ENCODE measurements at regions of chr1 and their contacts with region 1.

Region 1: GRCh38 chr1:1406817-1407635 is at the start of gene MRPL20:
- DNase-seq: peak; percentile 96 to 98
- ATAC-seq: peak; percentile 97 to 99 (median 98)
- H3K4me3 ChIP-seq: peak within 1 kb of the TSS; percentile 92
- H3K27ac ChIP-seq: peak within 1 kb of the TSS; percentile 83
- H3K4me1 ChIP-seq: peaks cover 29% of the 10 kb centered on the region
- H3K27me3 ChIP-seq: no peaks in the 10 kb centered on the region
- CTCF ChIP-seq: no peak
- total RNA-seq, gene MRPL20: 114 to 159 (median 143) TPM

Region 2: DNA sequence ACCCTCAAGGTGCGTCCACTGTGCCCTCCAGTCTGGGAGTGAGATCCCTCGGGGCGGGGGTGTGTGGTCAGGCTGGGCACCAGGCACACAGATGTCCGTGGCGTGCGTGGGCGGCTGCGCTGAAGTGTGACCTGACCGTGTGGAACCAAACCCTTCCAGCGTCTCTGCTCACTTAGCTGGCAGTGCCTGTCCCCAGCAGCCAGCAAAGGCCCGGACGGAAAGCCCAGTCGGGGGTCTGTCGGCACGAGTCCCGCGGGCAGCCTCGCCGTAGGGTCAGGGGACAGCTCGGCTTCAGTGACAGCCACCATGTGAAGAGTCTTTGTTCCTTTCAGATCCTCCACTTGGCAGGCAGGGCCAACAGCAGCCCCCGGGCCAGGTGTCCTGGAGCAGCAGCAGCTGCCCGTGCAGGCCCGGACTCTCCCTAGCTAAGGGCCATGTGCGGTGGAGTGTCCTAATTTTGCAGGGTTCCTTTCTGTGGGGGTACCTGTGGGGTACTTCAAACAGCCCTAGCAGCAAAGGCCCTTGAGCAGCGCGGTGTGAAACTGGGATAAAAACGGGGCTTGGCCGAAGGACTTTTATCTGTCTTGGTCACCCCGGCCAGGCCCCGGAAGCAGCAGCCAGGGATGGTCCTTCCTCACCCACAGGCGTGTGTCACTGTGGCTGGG is 221.8 kb before region 1 on chr1:
- intact Hi-C with region 1: no loop called
- DNase-seq: peak in 1 of 2 donors; percentile 13
- ATAC-seq: no peak
- H3K4me3 ChIP-seq: no peak overlapping the region
- H3K27ac ChIP-seq: no peak overlapping the region
- H3K4me1 ChIP-seq: no peaks in the 10 kb centered on the region
- H3K27me3 ChIP-seq: peaks cover 0 to 20% (median 2%) of the 10 kb centered on the region in 3 donors
- CTCF ChIP-seq: no peak

Region 3: GRCh38 chr1:1441002-1441888 is 34.2 kb after region 1 on chr1:
- intact Hi-C with region 1: loop called in 1 of 2 experiments (anchors 5 kb)
- DNase-seq: peak; percentile 64 to 80
- ATAC-seq: peak; percentile 82 to 95 (median 88)
- H3K4me3 ChIP-seq: peak overlapping the region; percentile 18
- H3K27ac ChIP-seq: no peak overlapping the region
- H3K4me1 ChIP-seq: peaks cover 18% of the 10 kb centered on the region
- H3K27me3 ChIP-seq: peaks cover 0 to 8% (median 0%) of the 10 kb centered on the region in 3 donors
- CTCF ChIP-seq: peak; percentile 87

Region 4: GRCh38 chr1:1462318-1462966 is 55.4 kb after region 1 on chr1:
- intact Hi-C with region 1: no loop called
- DNase-seq: no peak
- ATAC-seq: peak in 3 of 4 donors; percentile 22 to 67 (median 49)
- H3K4me3 ChIP-seq: no peak overlapping the region
- H3K27ac ChIP-seq: no peak overlapping the region
- H3K4me1 ChIP-seq: no peaks in the 10 kb centered on the region
- H3K27me3 ChIP-seq: peaks cover 0 to 8% (median 0%) of the 10 kb centered on the region in 3 donors
- CTCF ChIP-seq: no peak

Region 5: GRCh38 chr1:1507305-1507704 is 100.3 kb after region 1 on chr1:
- intact Hi-C with region 1: loop called in 1 of 2 experiments (anchors 10 kb)
- DNase-seq: no peak
- ATAC-seq: no peak
- H3K4me3 ChIP-seq: no peak overlapping the region
- H3K27ac ChIP-seq: no peak overlapping the region
- H3K4me1 ChIP-seq: peaks cover 23% of the 10 kb centered on the region
- H3K27me3 ChIP-seq: no peaks in the 10 kb centered on the region
- CTCF ChIP-seq: no peak

Region 6: DNA sequence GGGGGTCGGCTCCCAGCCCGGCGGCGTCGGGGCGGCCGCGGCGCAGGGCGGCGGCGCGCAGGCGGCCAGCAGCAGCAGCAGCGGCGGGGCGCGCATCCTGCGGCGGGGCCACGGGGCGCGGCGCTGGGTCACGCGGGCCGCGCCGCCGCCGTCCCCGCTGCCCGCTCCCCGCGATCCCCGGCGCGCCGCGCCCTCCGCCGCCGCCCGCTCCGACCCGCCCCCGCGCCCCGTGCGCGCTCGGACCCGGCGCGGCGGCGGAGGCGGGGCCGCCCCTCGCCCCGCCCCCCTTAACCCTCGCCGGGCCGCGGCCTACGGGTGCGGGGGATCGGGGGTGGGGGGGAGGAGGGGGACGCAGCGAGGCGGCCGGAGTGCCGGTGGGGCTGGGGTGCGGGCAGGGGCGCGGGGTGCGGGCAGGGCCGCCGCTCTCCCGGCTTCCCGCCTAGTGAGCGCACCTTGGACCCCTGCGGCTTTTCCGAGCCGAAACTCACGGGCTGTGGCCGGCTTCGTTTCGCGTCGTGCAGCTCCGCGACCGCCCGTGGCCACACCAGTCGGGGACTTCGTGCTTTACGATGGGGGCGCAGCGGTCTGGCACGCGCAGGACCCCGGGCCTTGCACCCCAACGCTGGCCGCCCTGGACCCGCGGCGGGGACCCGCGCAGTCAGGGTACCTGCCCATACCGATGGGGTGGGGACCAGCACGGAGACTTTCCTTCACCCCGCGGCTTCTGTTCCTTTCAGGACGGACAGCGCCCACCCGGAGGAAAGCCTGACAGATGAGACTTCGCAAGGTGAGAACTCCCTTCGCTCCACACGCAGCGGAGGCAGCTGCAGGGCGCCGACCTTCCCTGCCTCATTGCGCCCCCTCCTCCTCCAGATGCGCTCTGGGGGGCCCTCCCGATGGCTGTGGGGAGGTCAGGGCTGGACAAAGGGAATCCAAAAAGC is 193.2 kb after region 1 on chr1 and contains the start of gene FNDC10:
- intact Hi-C with region 1: no loop called
- DNase-seq: no peak
- ATAC-seq: no peak
- H3K4me3 ChIP-seq: peak within 1 kb of the TSS; percentile 55
- H3K27ac ChIP-seq: no peak within 1 kb of the TSS
- H3K4me1 ChIP-seq: peaks cover 13% of the 10 kb centered on the region
- H3K27me3 ChIP-seq: peaks cover 0 to 64% (median 27%) of the 10 kb centered on the region in 3 donors
- CTCF ChIP-seq: no peak
- total RNA-seq, gene FNDC10: 0.44 to 0.89 (median 0.82) TPM in 3 of 4 donors, not detected in the other

Measured in psoas muscle (tissue), 8 donors.